B cell (primary cell): ENCODE measurements at regions of chr1 and their contacts with region 1.

Region 1: DNA sequence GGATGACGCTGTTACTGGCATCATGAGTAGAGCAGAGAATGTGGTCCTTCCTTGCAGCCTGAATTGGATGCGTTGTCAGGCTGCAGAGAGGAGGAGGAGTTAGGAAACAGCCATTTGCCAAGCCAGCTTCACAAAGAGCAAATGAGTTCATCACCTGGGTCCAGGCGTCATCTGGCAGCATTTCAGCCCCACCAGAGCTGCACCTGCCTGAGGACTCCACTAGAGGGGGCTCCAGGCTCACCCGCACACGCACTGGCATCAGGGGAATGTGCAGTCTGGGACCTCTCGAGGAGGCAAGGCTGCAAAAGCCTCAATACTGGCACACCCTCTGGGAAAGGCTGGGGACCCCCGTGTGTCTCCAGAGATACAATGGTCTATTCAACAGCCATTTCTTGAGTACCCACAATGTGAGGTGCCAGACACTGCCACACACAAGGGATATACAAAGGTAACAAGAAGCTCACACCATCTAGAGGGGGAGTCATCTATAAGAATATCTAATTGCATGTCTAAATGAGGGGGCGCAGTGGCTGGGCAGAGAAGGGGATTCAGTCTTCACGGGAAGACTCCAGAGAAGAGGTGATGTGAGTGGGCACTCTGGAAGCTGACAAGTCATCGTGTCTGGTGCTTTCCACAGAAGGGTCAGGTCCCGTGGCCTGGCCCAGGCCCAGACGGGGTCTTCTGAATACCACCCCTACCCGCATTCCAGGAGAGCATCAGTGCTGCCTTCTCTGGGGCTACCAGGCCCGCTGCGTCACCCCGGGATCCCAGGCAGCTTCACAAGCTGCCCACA is 53.5 kb upstream of the CNTN2 start:
- DNase-seq: peak; percentile 77
- ATAC-seq: peak; percentile 71
- H3K4me3 ChIP-seq: no peak overlapping the region
- H3K4me3 Mint-ChIP-seq: no peak overlapping the region
- H3K27ac ChIP-seq: no peak overlapping the region
- H3K27ac Mint-ChIP-seq: no peak overlapping the region
- H3K4me1 ChIP-seq: peaks cover 15 to 21% of the 10 kb centered on the region in 2 donors
- H3K4me1 Mint-ChIP-seq: peaks cover 22% of the 10 kb centered on the region
- H3K27me3 ChIP-seq: peaks cover 0 to 2% (median 0%) of the 10 kb centered on the region in 4 experiments
- H3K27me3 Mint-ChIP-seq: peaks cover 5% of the 10 kb centered on the region
- CTCF ChIP-seq: peak; percentile 81

Region 2: GRCh38 chr1:205054013-205054412 is 64.6 kb after region 1 on chr1:
- CTCF ChIA-PET with region 1: no interaction called
- POLR2A ChIA-PET with region 1: no interaction called
- intact Hi-C with region 1: no loop called
- DNase-seq: no peak
- ATAC-seq: no peak
- H3K4me3 ChIP-seq: no peak overlapping the region
- H3K4me3 Mint-ChIP-seq: no peak overlapping the region
- H3K27ac ChIP-seq: no peak overlapping the region
- H3K27ac Mint-ChIP-seq: no peak overlapping the region
- H3K4me1 ChIP-seq: no peaks in the 10 kb centered on the region
- H3K4me1 Mint-ChIP-seq: no peaks in the 10 kb centered on the region
- H3K27me3 ChIP-seq: peaks cover 0 to 4% (median 0%) of the 10 kb centered on the region in 4 experiments
- H3K27me3 Mint-ChIP-seq: peaks cover 8% of the 10 kb centered on the region
- CTCF ChIP-seq: no peak

Region 3: DNA sequence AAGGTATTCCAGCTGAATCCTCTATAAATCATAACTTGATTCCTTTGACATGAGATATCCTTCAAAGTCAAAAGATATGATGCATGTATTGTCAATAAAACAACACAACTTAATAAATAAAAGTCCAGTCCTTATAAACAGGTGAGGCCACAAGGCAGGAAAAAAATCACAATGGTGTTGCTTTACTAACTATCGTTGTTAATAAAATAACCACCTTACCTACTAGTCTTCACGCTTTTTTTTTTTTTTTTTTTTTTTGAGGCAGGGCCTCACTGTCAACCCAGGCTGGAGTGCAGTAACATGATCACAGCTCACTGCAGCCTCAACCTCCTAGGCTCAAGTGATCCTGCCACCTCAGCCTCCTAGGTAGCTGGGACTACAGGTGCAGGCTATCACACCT is 94.9 kb after region 1 on chr1 and contains the start of gene TMEM81:
- CTCF ChIA-PET with region 1: interaction called, 3 read pairs
- POLR2A ChIA-PET with region 1: interaction called, 10 read pairs
- intact Hi-C with region 1: no loop called
- DNase-seq: no peak
- ATAC-seq: no peak
- H3K4me3 ChIP-seq: no peak within 1 kb of the TSS
- H3K4me3 Mint-ChIP-seq: no peak within 1 kb of the TSS
- H3K27ac ChIP-seq: no peak within 1 kb of the TSS
- H3K27ac Mint-ChIP-seq: no peak within 1 kb of the TSS
- H3K4me1 ChIP-seq: no peaks in the 10 kb centered on the region
- H3K4me1 Mint-ChIP-seq: no peaks in the 10 kb centered on the region
- H3K27me3 ChIP-seq: no peaks in the 10 kb centered on the region
- H3K27me3 Mint-ChIP-seq: no peaks in the 10 kb centered on the region
- CTCF ChIP-seq: no peak
- total RNA-seq, gene TMEM81: 6.2 and 6.8 TPM in 2 replicates